ENCODE measurements at regions of chr20 and their contacts with region 1.

Region 1: GRCh38 chr20:25539742-25540672 is 45.3 kb downstream of the NINL start:
- DNase-seq: peak; percentile 29
- H3K4me3 Mint-ChIP-seq: no peak overlapping the region
- H3K27ac Mint-ChIP-seq: no peak overlapping the region
- H3K4me1 Mint-ChIP-seq: no peaks in the 10 kb centered on the region
- H3K27me3 Mint-ChIP-seq: no peaks in the 10 kb centered on the region
- CTCF ChIP-seq: no peak

Region 2: DNA sequence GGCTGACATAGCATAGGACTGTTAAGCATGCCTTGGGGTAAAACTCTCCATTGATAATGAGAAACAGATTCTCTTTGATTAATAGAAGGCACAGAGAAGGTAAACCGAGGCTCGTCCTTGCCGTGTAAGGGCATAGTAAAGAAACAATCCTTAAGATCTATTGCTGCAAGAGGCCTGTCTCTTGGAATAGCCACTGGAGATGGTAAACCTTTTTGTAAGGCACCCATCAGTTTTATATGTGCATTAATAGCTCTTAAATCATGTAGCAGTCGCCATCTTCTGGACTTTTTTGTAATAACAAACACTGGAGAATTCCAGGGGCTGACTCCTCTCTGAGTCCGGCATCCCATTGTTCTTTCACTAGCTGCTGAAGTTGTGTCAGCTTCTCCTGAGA is 141.0 kb before region 1 on chr20:
- CTCF ChIA-PET with region 1: interaction called, 25 read pairs
- POLR2A ChIA-PET with region 1: no interaction called
- intact Hi-C with region 1: no loop called
- DNase-seq: peak; percentile 76
- H3K4me3 Mint-ChIP-seq: no peak overlapping the region
- H3K27ac Mint-ChIP-seq: no peak overlapping the region
- H3K4me1 Mint-ChIP-seq: no peaks in the 10 kb centered on the region
- H3K27me3 Mint-ChIP-seq: no peaks in the 10 kb centered on the region
- CTCF ChIP-seq: peak; percentile 62

Region 3: DNA sequence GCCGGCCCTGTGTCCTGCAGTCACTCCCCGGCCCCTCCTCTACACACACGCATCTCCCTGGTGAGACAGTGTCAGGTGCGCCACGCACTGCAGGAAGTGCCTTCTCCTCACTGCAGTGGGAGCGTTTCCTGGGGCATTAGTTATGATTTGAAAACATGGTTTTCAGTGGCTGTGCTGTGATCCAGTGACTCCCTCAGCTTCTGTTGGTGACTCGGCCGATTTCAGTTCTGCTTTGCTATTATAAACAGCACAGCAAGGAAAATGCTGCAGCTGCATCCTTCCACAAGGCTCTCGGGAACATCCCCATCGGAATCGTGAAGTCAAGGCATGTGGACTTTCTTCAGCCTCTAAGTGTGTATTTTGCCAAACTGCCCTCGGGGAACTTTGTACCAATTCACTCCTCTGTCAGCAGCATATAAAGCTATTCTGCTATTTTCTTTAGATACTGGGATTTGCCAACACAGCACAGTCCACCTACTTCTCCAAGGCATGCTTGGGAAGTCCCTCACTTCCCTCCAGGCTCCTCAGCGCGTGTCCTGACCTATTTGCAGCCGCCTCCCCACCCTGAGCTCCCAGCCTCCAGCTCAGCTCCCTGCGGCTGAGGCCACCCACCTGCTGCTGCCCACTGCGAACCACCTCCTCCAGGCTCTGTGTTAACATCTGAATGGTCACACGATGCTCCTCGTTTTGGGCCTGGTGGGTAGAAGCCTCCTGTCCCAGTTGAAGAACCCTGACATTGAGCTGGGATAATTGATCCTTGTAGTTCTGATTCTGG is 78.0 kb before region 1 on chr20:
- CTCF ChIA-PET with region 1: interaction called, 25 read pairs
- POLR2A ChIA-PET with region 1: no interaction called
- intact Hi-C with region 1: no loop called
- DNase-seq: no peak
- H3K4me3 Mint-ChIP-seq: no peak overlapping the region
- H3K27ac Mint-ChIP-seq: no peak overlapping the region
- H3K4me1 Mint-ChIP-seq: no peaks in the 10 kb centered on the region
- H3K27me3 Mint-ChIP-seq: peaks cover 12% of the 10 kb centered on the region
- CTCF ChIP-seq: no peak

Region 4: DNA sequence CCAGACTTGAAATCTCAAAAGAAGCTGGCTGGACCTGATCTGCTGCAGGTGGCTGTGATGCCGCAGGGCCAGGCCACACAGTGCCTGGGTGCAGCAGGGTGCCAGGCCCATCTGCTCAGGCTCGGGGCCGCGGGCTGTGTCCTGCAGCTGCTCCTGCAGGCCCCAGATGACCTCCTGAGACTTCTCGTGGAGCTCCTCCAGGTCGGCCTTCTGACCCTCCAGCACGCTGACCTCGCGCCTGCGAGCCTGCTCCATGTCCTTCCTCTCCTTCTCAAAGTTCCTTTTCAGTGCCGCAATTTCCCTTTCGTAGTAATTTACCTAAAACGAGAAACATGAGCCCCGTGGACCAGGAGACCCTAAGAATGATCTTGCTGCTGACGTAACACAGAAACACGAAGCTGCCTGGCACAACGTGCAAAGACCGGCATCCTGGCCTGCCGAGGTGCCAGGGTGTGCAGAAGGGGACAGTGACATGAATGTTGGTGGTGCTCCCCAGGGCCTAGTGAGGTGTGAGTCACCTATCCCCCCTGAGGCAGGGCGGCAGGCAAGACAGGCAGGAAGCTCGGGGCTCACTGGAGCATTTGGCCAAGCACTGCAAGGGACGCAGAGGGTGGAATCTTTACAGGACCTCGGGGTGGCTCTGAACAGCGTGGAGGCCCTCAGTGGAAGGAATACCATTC is 61.0 kb before region 1 on chr20:
- CTCF ChIA-PET with region 1: interaction called, 37 read pairs
- POLR2A ChIA-PET with region 1: interaction called, 4 read pairs
- intact Hi-C with region 1: no loop called
- DNase-seq: no peak
- H3K4me3 Mint-ChIP-seq: no peak overlapping the region
- H3K27ac Mint-ChIP-seq: peak overlapping the region; percentile 8
- H3K4me1 Mint-ChIP-seq: peaks cover 13% of the 10 kb centered on the region
- H3K27me3 Mint-ChIP-seq: no peaks in the 10 kb centered on the region
- CTCF ChIP-seq: no peak

Region 5: DNA sequence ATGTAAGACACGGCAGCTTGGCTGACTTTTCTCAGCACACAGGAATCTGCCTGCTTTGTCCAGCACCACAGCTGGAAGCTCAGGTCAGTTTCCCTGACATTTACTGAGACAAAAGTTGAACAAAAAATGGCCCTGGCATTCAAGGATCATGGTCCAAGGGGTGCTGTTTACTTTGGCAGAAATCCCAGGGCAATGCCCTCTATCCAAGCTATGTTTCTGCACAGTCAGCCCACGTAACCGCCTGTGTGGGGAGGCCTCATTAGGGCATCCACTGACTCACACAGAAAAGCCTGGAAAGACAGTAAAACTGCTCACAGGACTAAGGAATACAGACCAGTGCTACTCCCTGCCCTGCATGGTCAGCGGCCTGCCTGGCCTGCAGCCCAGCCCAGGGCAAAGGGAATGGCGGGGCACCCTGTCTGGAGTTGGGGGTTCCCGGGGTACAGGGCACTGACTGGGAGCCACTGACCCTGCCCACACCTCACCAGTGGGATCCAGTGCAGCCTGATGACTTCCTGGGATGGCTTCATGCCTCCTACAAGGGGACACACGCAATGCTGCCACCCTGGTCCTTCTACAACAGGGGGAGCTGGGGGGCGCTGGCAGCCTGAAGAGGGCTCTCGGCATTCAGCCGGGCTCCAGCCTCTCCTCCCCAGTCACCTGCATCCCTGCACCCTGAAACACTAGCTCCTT is 31.8 kb before region 1 on chr20:
- CTCF ChIA-PET with region 1: interaction called, 11 read pairs
- POLR2A ChIA-PET with region 1: no interaction called
- intact Hi-C with region 1: no loop called
- DNase-seq: peak; percentile 87
- H3K4me3 Mint-ChIP-seq: no peak overlapping the region
- H3K27ac Mint-ChIP-seq: no peak overlapping the region
- H3K4me1 Mint-ChIP-seq: peaks cover 12% of the 10 kb centered on the region
- H3K27me3 Mint-ChIP-seq: no peaks in the 10 kb centered on the region
- CTCF ChIP-seq: no peak

Region 6: DNA sequence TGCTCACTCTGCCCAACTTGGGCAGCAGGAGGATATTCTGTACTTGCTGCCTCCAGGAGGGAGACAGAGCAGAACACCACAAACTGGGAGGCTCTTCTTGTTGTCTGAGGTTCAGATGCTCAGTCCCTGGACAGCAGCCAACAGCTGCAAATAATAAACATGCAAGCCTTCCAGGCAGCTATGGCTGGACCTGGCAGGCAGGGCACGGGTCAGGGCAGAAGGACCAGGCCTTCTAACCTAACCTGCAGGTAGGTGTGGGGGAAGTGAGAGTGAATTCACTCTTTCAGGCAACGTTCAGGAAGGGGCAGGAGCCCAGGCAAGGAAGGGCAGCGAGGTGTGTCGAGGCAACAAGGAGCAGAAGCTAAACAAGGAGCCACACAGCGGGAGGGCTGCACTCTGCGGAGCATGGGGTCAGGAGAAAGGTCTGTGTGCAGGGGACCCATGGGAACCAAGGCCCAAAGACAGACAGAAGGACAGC is 13.9 kb after region 1 on chr20:
- CTCF ChIA-PET with region 1: interaction called, 38 read pairs
- POLR2A ChIA-PET with region 1: interaction called, 5 read pairs
- intact Hi-C with region 1: no loop called
- DNase-seq: peak; percentile 23
- H3K4me3 Mint-ChIP-seq: no peak overlapping the region
- H3K27ac Mint-ChIP-seq: no peak overlapping the region
- H3K4me1 Mint-ChIP-seq: peaks cover 5% of the 10 kb centered on the region
- H3K27me3 Mint-ChIP-seq: no peaks in the 10 kb centered on the region
- CTCF ChIP-seq: no peak

Measured in MCF 10A (cell line).